CD14-positive monocyte (primary cell): ENCODE measurements at regions of chr5 and their contacts with region 1.

Region 1: GRCh38 chr5:177113566-177114424 is 19.8 kb upstream of the NSD1 start:
- DNase-seq: peak; percentile 68 to 74 (median 71)
- H3K4me3 ChIP-seq: peak overlapping the region in 1 of 3 experiments; percentile 74
- H3K4me3 Mint-ChIP-seq: peak overlapping the region; percentile 48 to 81
- H3K27ac ChIP-seq: peak overlapping the region; percentile 84 to 86
- H3K27ac Mint-ChIP-seq: peak overlapping the region; percentile 88 to 96 (median 92)
- H3K4me1 ChIP-seq: peaks cover 27 to 28% of the 10 kb centered on the region in 2 donors
- H3K4me1 Mint-ChIP-seq: peaks cover 29% of the 10 kb centered on the region
- H3K27me3 ChIP-seq: no peaks in the 10 kb centered on the region
- H3K27me3 Mint-ChIP-seq: peaks cover 0 to 3% (median 2%) of the 10 kb centered on the region in 3 donors
- CTCF ChIP-seq: peak; percentile 97

Region 2: GRCh38 chr5:177133853-177134696 is 20.3 kb after region 1 on chr5:
- intact Hi-C with region 1: loop called in 1 of 2 experiments (anchors 2 kb)
- DNase-seq: peak; percentile 40 to 62 (median 52)
- H3K4me3 ChIP-seq: peak overlapping the region; percentile 57 to 84 (median 66)
- H3K4me3 Mint-ChIP-seq: peak overlapping the region; percentile 82 to 92
- H3K27ac ChIP-seq: peak overlapping the region; percentile 63 to 86
- H3K27ac Mint-ChIP-seq: peak overlapping the region; percentile 75 to 91 (median 89)
- H3K4me1 ChIP-seq: peaks cover 34 to 54% of the 10 kb centered on the region in 2 donors
- H3K4me1 Mint-ChIP-seq: peaks cover 35% of the 10 kb centered on the region
- H3K27me3 ChIP-seq: no peaks in the 10 kb centered on the region
- H3K27me3 Mint-ChIP-seq: no peaks in the 10 kb centered on the region
- CTCF ChIP-seq: no peak

Region 3: GRCh38 chr5:177183142-177183541 is 69.3 kb after region 1 on chr5:
- intact Hi-C with region 1: loop called in 1 of 2 experiments (anchors 5 kb)
- DNase-seq: no peak
- H3K4me3 ChIP-seq: no peak overlapping the region
- H3K4me3 Mint-ChIP-seq: no peak overlapping the region
- H3K27ac ChIP-seq: no peak overlapping the region
- H3K27ac Mint-ChIP-seq: no peak overlapping the region
- H3K4me1 ChIP-seq: peaks cover 0 to 20% of the 10 kb centered on the region in 2 donors
- H3K4me1 Mint-ChIP-seq: peaks cover 17% of the 10 kb centered on the region
- H3K27me3 ChIP-seq: no peaks in the 10 kb centered on the region
- H3K27me3 Mint-ChIP-seq: peaks cover 0 to 1% (median 0%) of the 10 kb centered on the region in 3 donors
- CTCF ChIP-seq: no peak

Region 4: DNA sequence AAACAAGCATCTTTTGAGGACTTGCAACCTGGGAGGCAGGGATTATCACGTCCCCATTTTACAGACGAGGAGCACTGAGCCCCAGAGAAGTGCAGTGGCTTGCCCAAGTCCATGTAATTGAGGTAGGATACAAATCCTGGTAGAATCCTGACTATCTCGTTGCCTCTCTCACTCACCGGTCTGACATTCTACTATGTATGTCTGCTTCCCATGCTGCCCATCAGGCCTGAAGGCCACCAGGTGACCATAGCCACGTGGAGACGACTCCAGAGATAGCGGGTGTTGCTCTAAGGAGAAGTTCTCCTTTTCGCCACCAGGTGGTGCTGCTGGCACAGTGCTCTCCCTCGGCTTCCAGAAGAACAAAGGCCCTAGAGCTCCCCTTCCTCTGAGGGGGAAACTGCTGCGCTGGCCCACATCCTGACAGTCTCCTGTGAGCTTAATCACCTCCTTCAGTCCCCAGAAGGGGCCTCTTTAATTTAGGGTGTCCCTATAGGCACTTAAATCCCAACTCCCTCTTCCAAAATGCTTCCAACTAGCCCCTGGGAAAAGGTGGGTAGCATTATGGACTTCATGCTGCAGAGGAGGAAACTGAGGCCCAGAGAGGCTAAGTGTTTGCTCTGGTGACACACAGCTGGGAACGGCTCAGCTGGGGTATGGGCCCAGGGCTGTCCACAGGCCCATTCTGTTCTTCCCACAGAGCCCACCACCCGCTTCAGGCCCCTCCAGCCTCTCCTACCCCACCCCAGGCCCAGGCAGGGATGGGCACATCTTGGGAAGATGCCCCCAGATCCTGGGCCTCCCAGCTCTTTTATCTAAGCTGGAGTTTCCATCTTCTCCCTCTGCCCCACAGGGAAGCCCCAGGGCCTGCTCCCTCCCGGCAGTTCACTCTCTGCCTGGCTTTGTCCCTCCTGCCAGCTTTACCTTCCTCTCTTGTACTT is 276.8 kb after region 1 on chr5:
- intact Hi-C with region 1: no loop called
- DNase-seq: peak; percentile 83 to 87 (median 83)
- H3K4me3 ChIP-seq: peak overlapping the region in 1 of 3 experiments; percentile 48
- H3K4me3 Mint-ChIP-seq: peak overlapping the region; percentile 48 to 55
- H3K27ac ChIP-seq: peak overlapping the region; percentile 55 to 85
- H3K27ac Mint-ChIP-seq: peak overlapping the region; percentile 73 to 97 (median 91)
- H3K4me1 ChIP-seq: peaks cover 44 to 48% of the 10 kb centered on the region in 2 donors
- H3K4me1 Mint-ChIP-seq: peaks cover 52% of the 10 kb centered on the region
- H3K27me3 ChIP-seq: no peaks in the 10 kb centered on the region
- H3K27me3 Mint-ChIP-seq: peaks cover 3 to 10% (median 8%) of the 10 kb centered on the region in 3 donors
- CTCF ChIP-seq: peak; percentile 99